ENCODE measurements at regions of chr15 and their contacts with region 1.

Region 1: GRCh38 chr15:59492389-59493377 is 54.7 kb downstream of the FAM81A start:
- DNase-seq: peak; percentile 76
- H3K4me3 ChIP-seq: no peak overlapping the region
- H3K27ac ChIP-seq: no peak overlapping the region
- H3K4me1 ChIP-seq: peaks cover 6 to 10% (median 7%) of the 10 kb centered on the region in 6 donors
- H3K27me3 ChIP-seq: no peaks in the 10 kb centered on the region
- CTCF ChIP-seq: peak; percentile 72 to 93 (median 88)
- POLR2A ChIP-seq: no peak

Region 2: DNA sequence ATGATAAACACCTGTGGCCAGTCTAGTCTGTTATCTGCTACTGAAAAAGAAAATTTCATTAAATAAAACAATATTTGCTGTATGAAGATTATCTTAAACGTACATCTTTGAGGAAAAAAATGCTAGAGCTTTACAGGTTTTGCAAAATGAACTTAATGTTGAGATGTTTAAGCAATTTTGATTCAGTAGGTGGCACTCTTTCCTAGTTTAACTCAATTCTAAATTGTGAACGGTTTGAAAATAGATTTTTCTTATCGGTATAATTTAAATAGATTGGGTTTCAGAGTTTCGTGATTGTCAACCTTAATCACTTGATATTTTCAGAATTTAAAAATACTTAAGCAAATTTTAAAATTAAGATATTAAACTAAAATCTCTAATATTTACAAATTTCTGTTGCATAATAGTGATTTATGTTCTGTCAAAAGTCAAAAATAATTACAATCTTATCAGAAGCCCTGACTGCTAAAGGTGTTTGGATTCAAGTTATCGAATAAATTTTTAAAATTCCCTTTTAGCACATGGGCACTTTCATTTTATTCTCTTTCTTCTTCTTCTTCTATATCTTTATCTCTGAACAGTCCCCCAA is 512.2 kb before region 1 on chr15:
- intact Hi-C with region 1: loop called (anchors 5 kb)
- DNase-seq: no peak
- H3K4me3 ChIP-seq: no peak overlapping the region
- H3K27ac ChIP-seq: peak overlapping the region in 5 of 8 donors; percentile 67 to 80 (median 75)
- H3K4me1 ChIP-seq: peaks cover 29 to 74% (median 45%) of the 10 kb centered on the region in 6 donors
- H3K27me3 ChIP-seq: no peaks in the 10 kb centered on the region
- CTCF ChIP-seq: peak in 9 of 11 experiments; percentile 33 to 66 (median 56)
- POLR2A ChIP-seq: no peak

Region 3: GRCh38 chr15:59148153-59148833 is 344.4 kb before region 1 on chr15:
- intact Hi-C with region 1: loop called (anchors 10 kb)
- DNase-seq: no peak
- H3K4me3 ChIP-seq: no peak overlapping the region
- H3K27ac ChIP-seq: no peak overlapping the region
- H3K4me1 ChIP-seq: no peaks in the 10 kb centered on the region
- H3K27me3 ChIP-seq: no peaks in the 10 kb centered on the region
- CTCF ChIP-seq: no peak
- POLR2A ChIP-seq: no peak

Region 4: GRCh38 chr15:59174835-59175831 is 317.6 kb before region 1 on chr15:
- intact Hi-C with region 1: loop called (anchors 10 kb)
- DNase-seq: no peak
- H3K4me3 ChIP-seq: no peak overlapping the region
- H3K27ac ChIP-seq: peak overlapping the region in 7 of 8 donors; percentile 9 to 63 (median 46)
- H3K4me1 ChIP-seq: peaks cover under 1 to 51% (median 9%) of the 10 kb centered on the region in 6 donors
- H3K27me3 ChIP-seq: no peaks in the 10 kb centered on the region
- CTCF ChIP-seq: peak; percentile 17 to 74 (median 52)
- POLR2A ChIP-seq: no peak

Region 5: GRCh38 chr15:59247364-59247763 is 245.3 kb before region 1 on chr15:
- intact Hi-C with region 1: loop called (anchors 10 kb)
- DNase-seq: no peak
- H3K4me3 ChIP-seq: no peak overlapping the region
- H3K27ac ChIP-seq: no peak overlapping the region
- H3K4me1 ChIP-seq: peaks cover 0 to 47% (median 29%) of the 10 kb centered on the region in 6 donors
- H3K27me3 ChIP-seq: no peaks in the 10 kb centered on the region
- CTCF ChIP-seq: peak in 10 of 11 experiments; percentile 32 to 72 (median 60)
- POLR2A ChIP-seq: no peak

Region 6: DNA sequence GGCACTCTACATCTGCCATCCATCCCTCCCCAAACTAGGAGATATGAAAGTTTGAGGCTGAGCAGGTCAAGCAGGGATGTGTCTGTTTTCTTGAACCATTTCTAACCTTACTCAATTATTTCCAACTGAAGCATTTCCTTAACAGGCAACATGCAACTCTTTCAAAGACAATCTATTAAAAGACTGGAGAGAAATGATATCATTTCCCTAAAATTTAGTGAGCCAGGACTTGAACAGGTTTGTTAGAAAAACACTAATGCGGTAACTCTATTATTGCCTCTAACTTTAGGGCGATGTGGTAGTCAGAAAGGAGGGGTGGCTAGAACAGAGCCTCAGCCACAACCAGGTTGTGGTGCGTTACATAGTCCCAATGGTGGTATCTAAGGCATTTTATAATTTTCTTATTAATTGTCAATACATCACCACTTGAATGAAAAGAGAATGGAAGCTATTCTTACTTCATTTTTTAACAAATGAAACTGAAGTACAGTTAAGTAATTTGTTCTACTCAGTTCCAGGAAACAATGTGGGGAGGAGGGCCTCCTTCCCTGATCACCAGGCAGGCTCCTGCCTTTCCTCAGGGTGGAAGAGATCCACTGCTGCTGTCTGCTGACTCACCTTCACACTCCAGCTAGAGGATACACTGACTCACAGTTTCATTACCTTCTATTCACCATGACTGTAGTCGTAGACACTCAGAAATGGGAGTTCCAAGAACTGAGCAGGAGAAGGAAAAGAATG is 142.8 kb before region 1 on chr15:
- intact Hi-C with region 1: no loop called
- DNase-seq: no peak
- H3K4me3 ChIP-seq: no peak overlapping the region
- H3K27ac ChIP-seq: peak overlapping the region in 5 of 8 donors; percentile 6 to 52 (median 40)
- H3K4me1 ChIP-seq: peaks cover 24 to 79% (median 52%) of the 10 kb centered on the region in 6 donors
- H3K27me3 ChIP-seq: no peaks in the 10 kb centered on the region
- CTCF ChIP-seq: no peak
- POLR2A ChIP-seq: no peak

Region 7: DNA sequence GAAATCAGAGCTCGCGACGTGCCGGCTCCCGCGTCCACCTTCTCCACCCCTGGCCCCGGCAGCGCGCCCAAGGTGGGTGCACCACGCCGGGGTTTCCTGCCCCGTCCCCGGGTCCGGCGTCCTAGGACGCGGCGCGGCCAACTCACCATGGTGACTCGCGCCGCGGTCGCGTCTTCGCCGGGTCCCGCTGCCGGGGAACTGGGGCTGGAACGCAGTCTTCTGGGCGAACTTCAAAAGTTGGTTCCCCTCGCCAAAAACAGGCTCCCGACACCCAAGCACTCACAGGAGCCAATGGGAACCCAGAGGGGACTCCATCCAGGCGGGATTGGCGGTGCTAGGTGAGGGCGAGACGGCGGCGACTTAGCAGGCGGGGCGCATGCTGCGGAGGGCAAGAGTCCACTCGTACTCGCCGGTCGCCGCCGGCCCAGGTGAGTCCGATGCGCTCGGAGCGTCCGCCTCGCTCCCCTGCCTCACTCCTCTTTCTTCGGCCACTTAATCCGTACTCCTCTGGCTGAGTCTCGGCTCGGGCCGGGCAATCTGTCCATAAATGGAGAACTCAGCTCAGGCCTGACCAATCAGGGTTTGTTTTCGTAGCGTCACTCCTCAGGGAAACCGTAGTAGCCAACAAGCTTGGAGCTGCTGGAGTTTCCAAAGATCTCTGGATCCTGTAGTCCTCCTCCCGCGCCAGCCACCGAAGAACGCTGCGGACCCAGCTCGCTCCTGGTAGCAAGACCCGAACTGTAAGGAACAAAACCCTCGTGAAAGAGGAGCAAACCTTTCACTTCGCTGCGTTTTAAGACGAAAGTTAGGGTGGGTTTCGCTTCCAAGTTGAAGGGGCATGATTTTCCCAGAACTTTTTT is 120.1 kb before region 1 on chr15 and contains the start of gene MYO1E:
- intact Hi-C with region 1: loop called (anchors 10 kb)
- DNase-seq: peak; percentile 86
- H3K4me3 ChIP-seq: peak within 1 kb of the TSS; percentile 61 to 96 (median 84)
- H3K27ac ChIP-seq: peak within 1 kb of the TSS; percentile 77 to 91 (median 87)
- H3K4me1 ChIP-seq: peaks cover 0 to 67% (median 41%) of the 10 kb centered on the region in 6 donors
- H3K27me3 ChIP-seq: peaks cover 0 to 38% (median 7%) of the 10 kb centered on the region in 7 donors
- CTCF ChIP-seq: no peak
- POLR2A ChIP-seq: peak in 2 of 3 donors; percentile 27 to 81
- total RNA-seq, gene MYO1E: 58.4 to 115 (median 87.2) TPM

Measured in spleen (tissue), 13 donors.